ENCODE measurements at regions of chr3 and their contacts with region 1.

Region 1: DNA sequence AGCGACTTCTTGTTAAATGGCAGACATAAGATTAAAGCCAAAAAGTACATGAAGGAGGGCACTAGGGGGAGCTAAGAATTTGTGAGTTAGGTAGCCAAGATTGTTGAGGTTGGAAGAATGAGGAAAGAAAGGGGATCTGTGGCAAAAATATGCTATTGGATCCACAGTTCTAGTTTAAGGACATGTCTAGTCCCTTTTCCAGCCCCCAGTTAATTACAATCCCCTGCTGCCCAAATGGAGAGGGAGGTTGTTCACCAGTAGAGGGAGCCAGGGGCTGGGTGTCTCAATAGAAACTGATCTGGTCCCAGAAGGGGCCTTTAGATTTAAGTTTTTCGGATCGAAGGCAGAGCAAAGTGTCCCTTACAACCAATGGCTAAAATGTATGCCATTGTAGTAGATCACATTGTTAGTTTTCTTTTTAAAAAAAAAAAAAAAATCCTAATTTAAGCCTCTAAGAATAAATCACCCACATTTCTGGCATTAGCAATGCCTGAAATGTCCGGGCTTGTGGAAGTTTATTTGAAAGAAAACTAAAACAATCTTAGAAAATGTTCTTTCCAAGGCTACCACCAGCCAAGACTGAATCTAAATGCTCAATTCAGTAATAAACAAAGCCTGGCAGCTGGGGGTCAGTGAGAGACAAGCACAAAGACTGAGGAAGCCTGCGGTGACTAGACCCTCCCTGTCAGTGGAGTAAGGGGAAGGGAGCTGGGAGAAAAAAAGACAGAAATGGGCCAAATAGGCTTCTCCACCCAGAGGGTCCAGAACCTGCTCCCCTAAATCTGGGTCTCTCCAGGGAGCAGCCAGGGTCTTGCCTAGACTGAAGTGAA is 7.1 kb downstream of the COL8A1 start:
- DNase-seq: no peak
- ATAC-seq: peak; percentile 27 to 34
- H3K4me3 ChIP-seq: no peak overlapping the region
- H3K27ac ChIP-seq: peak overlapping the region; percentile 24 to 44 (median 36)
- H3K4me1 ChIP-seq: no peaks in the 10 kb centered on the region
- H3K27me3 ChIP-seq: no peaks in the 10 kb centered on the region
- CTCF ChIP-seq: peak; percentile 30 to 71 (median 52)
- POLR2A ChIP-seq: no peak

Region 2: GRCh38 chr3:99666201-99666600 is 20.7 kb after region 1 on chr3:
- in situ Hi-C with region 1: no loop called
- intact Hi-C with region 1: no loop called
- DNase-seq: no peak
- ATAC-seq: peak in 1 of 2 donors; percentile 73
- H3K4me3 ChIP-seq: no peak overlapping the region
- H3K27ac ChIP-seq: no peak overlapping the region
- H3K4me1 ChIP-seq: no peaks in the 10 kb centered on the region
- H3K27me3 ChIP-seq: no peaks in the 10 kb centered on the region
- CTCF ChIP-seq: no peak
- POLR2A ChIP-seq: no peak

Region 3: DNA sequence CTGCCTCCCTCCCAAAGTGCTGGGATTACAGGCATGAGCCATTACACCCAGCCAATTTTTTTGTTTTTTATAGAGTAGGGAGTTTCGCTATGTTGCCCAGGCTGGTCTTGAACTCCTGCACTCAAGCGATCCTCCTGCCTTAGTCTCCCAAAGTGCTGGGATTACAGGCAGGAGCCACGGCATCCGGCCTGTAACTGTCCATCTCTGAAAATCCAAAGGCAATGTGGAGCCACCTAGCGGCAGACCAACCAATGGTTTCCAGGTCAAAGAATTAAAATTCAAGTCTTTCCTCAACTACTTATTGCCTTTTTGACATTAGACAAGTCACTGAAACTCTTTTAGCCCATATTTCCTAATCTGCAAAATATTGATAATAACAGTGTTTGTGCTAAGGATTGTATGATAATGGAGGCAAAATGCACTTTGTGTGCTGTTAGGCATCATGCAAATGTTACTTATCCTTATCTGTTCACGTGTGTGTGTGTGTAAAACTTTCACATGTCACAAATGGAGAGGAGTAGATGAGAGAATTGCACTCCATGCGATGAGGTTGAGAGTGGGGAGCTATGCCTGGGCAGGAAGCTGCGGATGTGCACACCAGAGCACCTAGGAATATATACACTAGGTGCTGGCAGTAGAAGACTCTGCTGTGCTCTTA is 41.6 kb after region 1 on chr3:
- in situ Hi-C with region 1: no loop called
- intact Hi-C with region 1: loop called (anchors 2 kb)
- DNase-seq: peak in 1 of 2 donors; percentile 25
- ATAC-seq: no peak
- H3K4me3 ChIP-seq: no peak overlapping the region
- H3K27ac ChIP-seq: no peak overlapping the region
- H3K4me1 ChIP-seq: no peaks in the 10 kb centered on the region
- H3K27me3 ChIP-seq: no peaks in the 10 kb centered on the region
- CTCF ChIP-seq: peak; percentile 36 to 67 (median 59)
- POLR2A ChIP-seq: no peak

Region 4: DNA sequence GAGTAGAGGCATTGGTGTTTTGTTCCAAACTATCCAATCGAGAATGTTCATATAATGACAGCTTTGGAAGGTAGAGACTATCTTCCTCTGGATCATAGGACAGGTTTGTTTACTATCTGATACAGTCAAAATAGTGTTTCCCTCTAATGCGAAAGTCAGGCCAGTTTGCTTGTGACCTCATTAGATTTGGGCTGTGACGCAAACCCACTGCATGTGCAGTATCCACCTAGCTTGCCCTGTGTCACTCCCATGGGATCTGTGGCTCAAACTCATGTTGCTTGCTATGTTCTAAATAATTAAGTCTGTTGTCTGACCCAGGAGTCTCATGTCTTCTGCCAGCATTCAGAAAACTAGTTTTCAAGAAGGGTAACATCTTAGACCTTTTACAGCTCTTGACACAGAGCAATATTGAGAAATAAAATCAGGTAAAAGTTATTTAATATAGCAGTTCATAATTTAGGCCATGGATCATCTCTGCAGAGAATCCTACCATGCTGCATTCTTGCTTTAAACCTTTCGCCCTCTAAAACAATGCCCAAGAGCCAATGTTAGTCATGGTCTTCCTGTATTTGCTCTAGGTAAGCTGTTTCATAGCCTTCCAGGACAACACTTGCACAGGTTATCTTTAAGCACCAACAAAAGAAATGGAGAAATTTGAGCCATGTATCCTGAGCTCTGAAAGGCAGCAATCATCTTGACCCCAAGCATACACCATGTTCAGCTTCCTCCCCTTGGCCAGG is 715.4 kb after region 1 on chr3:
- in situ Hi-C with region 1: no loop called
- intact Hi-C with region 1: no loop called
- DNase-seq: no peak
- ATAC-seq: no peak
- H3K4me3 ChIP-seq: no peak overlapping the region
- H3K27ac ChIP-seq: no peak overlapping the region
- H3K4me1 ChIP-seq: no peaks in the 10 kb centered on the region
- H3K27me3 ChIP-seq: no peaks in the 10 kb centered on the region
- CTCF ChIP-seq: no peak
- POLR2A ChIP-seq: no peak

Measured in gastrocnemius medialis (tissue), 4 donors.